Aorta (tissue), 5 donors: ENCODE measurements at regions of chr22 and their contacts with region 1.

Region 1: GRCh38 chr22:44935724-44936123 is 74.1 kb downstream of the PHF21B start:
- DNase-seq: peak in 1 of 2 donors; percentile 32
- ATAC-seq: no peak
- H3K4me3 ChIP-seq: no peak overlapping the region
- H3K27ac ChIP-seq: no peak overlapping the region
- H3K4me1 ChIP-seq: no peaks in the 10 kb centered on the region
- H3K27me3 ChIP-seq: no peaks in the 10 kb centered on the region

Region 2: DNA sequence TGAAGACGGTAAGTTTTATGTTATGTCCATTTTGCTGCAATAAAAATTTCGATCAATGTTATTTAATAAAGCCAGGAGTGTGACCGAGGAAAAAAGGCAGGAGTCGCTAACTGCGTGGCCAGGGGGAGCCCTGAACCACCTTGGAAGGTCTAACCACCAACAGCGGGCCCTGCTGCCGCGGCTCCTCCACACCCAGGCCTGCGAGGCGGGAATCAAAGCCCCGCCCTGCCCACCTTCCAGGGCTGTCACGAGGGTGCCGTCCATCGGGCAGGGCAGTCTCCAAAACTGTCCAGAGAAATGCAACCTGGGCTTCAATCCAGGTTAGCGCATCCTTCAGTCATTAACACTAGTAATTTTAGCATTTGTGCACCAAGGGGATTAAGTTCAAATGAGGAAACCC is 55.1 kb after region 1 on chr22:
- intact Hi-C with region 1: loop called in 1 of 2 experiments (anchors 2 kb)
- DNase-seq: no peak
- ATAC-seq: no peak
- H3K4me3 ChIP-seq: no peak overlapping the region
- H3K27ac ChIP-seq: no peak overlapping the region
- H3K4me1 ChIP-seq: no peaks in the 10 kb centered on the region
- H3K27me3 ChIP-seq: no peaks in the 10 kb centered on the region